Activated T-helper 1 cell treated with anti-CD3 and anti-CD28 coated beads, Interleukin-12 subunit alpha, Interleukin-12 subunit beta, Interleukin-2, Interleukin-4 antibody, amounts not matched to agents 30 ng/mL and 10 ng/mL and 1 ng/mL, durations not matched to agents 14 hours and 24 hours and 36 hours (primary cell): ENCODE measurements at regions of chrX and their contacts with region 1.

Region 1: GRCh38 chrX:101595739-101596419 is 21.9 kb downstream of the ARMCX6 start:
- DNase-seq: peak; percentile 8
- H3K4me3 Mint-ChIP-seq: no peak overlapping the region
- H3K27ac Mint-ChIP-seq: no peak overlapping the region
- H3K4me1 Mint-ChIP-seq: no peaks in the 10 kb centered on the region
- H3K27me3 Mint-ChIP-seq: peaks cover 2% of the 10 kb centered on the region

Region 2: GRCh38 chrX:101799387-101799786 is 203.5 kb after region 1 on chrX:
- intact Hi-C with region 1: loop called (anchors 5 kb)
- DNase-seq: peak; percentile 72
- H3K4me3 Mint-ChIP-seq: peak overlapping the region; percentile 70
- H3K27ac Mint-ChIP-seq: no peak overlapping the region
- H3K4me1 Mint-ChIP-seq: peaks cover 4% of the 10 kb centered on the region
- H3K27me3 Mint-ChIP-seq: peaks cover 4% of the 10 kb centered on the region

Region 3: DNA sequence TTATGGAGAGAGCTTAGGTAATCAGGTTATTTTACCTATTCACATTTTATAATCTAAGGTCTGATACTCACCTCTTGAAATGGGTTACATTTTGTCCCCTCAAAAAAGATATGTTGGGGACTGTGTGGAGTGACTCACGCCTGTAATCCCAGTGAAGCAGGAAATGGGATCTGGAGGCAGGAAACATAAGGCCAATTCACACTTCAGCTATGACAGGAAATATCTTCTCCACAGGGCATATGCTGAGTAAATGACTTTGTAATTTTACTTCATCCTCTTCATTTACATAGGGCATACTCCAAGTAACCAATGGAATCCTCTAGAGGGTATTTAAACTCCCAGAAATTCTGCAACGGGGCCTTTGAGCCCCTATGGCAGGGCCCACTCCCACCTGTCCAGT is 390.7 kb after region 1 on chrX:
- intact Hi-C with region 1: no loop called
- DNase-seq: no peak
- H3K4me3 Mint-ChIP-seq: no peak overlapping the region
- H3K27ac Mint-ChIP-seq: no peak overlapping the region
- H3K4me1 Mint-ChIP-seq: no peaks in the 10 kb centered on the region
- H3K27me3 Mint-ChIP-seq: no peaks in the 10 kb centered on the region

Region 4: DNA sequence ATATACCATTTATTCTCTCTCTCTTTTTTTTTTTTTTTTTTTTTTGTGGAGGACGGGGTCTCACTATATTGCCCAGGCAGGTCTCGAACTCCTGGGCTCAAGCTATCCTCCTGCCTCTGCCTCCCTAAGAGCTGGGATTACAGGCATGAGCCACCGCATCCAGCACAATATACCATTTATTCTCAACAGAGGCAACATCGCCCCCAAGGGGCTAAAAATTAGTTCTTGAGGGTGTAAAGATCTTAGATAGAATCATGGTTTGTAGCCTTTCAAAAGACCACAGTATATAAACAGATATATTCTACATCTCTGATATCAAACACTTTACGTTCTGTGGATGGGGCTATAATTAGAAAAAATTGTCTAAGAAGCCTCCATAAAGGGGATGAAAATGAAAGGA is 489.8 kb after region 1 on chrX:
- intact Hi-C with region 1: loop called (anchors 5 kb)
- DNase-seq: no peak
- H3K4me3 Mint-ChIP-seq: no peak overlapping the region
- H3K27ac Mint-ChIP-seq: no peak overlapping the region
- H3K4me1 Mint-ChIP-seq: no peaks in the 10 kb centered on the region
- H3K27me3 Mint-ChIP-seq: no peaks in the 10 kb centered on the region